ENCODE measurements at regions of chr21 and their contacts with region 1.

Region 1: GRCh38 chr21:44949779-44950198 is 10.0 kb downstream of the SLX9 start:
- DNase-seq: peak; percentile 53 to 98
- H3K4me3 ChIP-seq: no peak overlapping the region
- H3K27ac ChIP-seq: no peak overlapping the region
- H3K4me1 ChIP-seq: no peaks in the 10 kb centered on the region; a peak in 1 of 7 replicates
- H3K27me3 ChIP-seq: no peaks in the 10 kb centered on the region
- CTCF ChIP-seq: peak in 2 of 3 experiments; percentile 93 to 98; a peak in 3 of 4 replicates
- EP300 ChIP-seq: no peak
- POLR2A ChIP-seq: no peak
- RAD21 ChIP-seq: peak; percentile 89 to 90

Region 2: DNA sequence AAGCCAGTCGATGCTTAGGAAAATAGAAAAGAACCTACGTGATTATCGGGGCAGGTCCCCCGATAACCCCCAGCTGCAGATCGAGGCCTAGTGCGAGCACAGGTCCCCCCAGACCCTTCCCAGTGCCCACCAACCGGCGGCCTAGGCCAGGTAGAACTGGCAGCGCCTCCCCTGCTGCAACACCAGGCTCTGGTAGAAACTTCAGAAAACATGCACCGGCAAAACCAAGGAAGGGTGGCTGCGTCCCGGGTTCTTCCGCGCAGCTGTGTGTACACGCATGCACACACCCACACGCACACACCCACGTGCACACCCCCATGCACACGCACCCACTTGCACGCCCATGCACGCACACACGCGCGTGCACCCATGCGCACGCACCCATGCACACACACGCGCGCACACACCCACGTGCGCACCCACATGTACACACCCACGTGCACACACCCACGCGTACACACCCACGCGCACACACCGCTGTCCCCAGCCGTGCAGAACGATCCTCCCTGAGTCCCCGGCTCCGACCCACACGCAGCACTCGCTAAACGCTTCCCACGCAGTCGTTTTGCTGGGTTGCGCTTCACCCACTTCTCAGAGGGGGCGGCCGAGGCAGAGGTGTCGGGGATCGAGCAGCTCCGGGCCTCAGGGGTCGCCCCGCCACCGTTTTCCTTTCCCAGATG is 243.6 kb before region 1 on chr21:
- CTCF ChIA-PET with region 1: no interaction called
- POLR2A ChIA-PET with region 1: no interaction called
- DNase-seq: peak in 1 of 2 experiments; percentile 56
- H3K4me3 ChIP-seq: peak overlapping the region; percentile 34 to 58 (median 44)
- H3K27ac ChIP-seq: peak overlapping the region; percentile 87
- H3K4me1 ChIP-seq: peaks cover 3 to 69% (median 59%) of the 10 kb centered on the region in 4 experiments
- H3K27me3 ChIP-seq: peaks cover 19 to 45% (median 41%) of the 10 kb centered on the region in 4 experiments
- CTCF ChIP-seq: no peak
- EP300 ChIP-seq: no peak
- POLR2A ChIP-seq: no peak
- RAD21 ChIP-seq: no peak

Region 3: DNA sequence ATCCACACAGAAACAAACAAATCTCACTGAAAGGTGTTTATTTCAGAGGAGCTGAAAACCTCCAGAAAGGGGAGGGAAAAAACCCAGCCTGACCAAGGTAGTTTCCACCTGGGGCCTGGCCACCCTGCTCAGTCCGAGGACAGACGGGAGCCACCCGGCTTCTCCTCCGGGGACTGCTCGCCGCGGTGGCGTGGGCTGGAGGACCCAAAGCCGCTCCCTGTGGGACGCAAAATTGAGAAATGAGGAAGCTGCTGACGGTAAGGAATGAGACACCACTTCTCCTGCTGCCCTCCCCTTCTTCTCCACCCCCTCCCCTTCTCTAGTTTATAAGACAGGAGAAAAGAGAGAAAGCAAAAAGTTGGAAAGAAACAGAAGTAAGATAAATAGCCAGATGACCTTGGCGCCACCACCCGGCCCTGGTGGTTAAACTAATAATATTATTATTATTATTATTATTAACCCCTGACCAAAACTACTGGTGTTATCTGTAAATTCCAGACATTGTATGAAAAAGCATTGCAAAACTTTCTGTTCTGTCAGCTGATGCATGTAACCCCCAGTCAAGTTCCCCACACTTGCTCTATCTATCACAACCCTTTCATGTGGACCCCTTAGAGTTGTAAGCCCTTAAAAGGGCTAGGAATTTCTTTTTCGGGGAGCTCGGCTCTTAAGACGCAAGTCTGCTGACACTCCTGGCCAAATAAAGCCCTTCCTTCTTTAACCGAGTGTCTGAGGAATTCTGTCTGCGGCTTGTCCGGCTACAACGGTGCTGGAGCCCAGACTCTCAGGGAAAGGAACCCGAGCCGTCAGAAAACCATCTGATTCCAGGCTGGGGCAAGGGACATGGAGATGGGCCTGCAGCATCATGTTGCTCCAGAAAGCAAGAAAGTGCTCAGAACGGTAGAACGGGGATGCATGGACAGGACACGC is 41.6 kb before region 1 on chr21:
- CTCF ChIA-PET with region 1: no interaction called
- POLR2A ChIA-PET with region 1: no interaction called
- DNase-seq: no peak
- H3K4me3 ChIP-seq: no peak overlapping the region
- H3K27ac ChIP-seq: no peak overlapping the region
- H3K4me1 ChIP-seq: peaks cover 0 to 11% (median 0%) of the 10 kb centered on the region in 4 experiments; a peak in 3 of 7 replicates
- H3K27me3 ChIP-seq: peaks cover 0 to 4% (median 1%) of the 10 kb centered on the region in 4 experiments; a peak in 1 of 7 replicates
- CTCF ChIP-seq: no peak
- EP300 ChIP-seq: no peak
- POLR2A ChIP-seq: no peak
- RAD21 ChIP-seq: no peak

Region 4: DNA sequence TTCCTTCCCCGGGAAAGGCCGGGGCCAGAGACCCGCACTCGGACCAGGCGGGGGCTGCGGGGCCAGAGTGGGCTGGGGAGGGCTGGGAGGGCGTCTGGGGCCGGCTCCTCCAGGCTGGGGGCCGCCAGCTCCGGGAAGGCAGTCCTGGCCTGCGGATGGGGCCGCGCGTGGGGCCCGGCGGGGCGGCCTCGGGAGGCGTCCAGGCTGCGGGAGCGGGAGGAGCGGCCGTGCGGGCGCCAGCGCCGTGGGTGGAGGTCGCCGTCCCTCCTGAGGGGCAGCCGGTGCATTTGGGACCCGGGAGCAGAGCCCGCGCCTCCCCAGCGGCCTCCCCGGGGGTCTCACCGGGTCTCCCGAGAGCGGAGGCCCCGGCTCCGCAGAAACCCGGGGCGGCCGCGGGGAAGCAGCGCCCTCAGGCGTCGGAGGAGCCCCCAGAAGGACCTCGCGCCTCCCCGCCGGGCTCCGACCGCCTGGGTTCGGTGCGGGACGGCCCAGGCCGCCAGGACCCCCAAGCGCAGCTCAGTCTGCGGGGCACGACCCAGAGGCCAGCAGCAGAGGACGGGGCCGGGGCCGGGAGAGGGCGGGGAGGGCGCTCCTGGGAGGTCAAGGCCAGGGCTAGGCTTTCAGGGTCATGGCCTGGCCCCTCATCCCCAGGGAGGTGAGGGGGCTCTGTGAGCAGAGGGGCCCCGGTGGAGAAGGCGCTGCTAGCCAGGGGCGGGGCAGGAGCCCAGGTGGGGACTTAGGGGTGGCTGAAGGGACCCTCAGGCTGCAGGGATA is 17.2 kb before region 1 on chr21:
- CTCF ChIA-PET with region 1: interaction called, 10 read pairs
- POLR2A ChIA-PET with region 1: interaction called, 6 read pairs
- DNase-seq: no peak
- H3K4me3 ChIP-seq: peak overlapping the region in 1 of 4 experiments; percentile 58; a peak in 3 of 8 replicates
- H3K27ac ChIP-seq: no peak overlapping the region
- H3K4me1 ChIP-seq: peaks cover 0 to 25% (median 16%) of the 10 kb centered on the region in 4 experiments; a peak in 5 of 7 replicates
- H3K27me3 ChIP-seq: peaks cover 25 to 72% (median 60%) of the 10 kb centered on the region in 4 experiments
- CTCF ChIP-seq: peak in 2 of 3 experiments; percentile 7 to 32; a peak in 3 of 4 replicates
- EP300 ChIP-seq: no peak
- POLR2A ChIP-seq: no peak
- RAD21 ChIP-seq: peak; percentile 43 to 64; a peak in 3 of 4 replicates

Region 5: DNA sequence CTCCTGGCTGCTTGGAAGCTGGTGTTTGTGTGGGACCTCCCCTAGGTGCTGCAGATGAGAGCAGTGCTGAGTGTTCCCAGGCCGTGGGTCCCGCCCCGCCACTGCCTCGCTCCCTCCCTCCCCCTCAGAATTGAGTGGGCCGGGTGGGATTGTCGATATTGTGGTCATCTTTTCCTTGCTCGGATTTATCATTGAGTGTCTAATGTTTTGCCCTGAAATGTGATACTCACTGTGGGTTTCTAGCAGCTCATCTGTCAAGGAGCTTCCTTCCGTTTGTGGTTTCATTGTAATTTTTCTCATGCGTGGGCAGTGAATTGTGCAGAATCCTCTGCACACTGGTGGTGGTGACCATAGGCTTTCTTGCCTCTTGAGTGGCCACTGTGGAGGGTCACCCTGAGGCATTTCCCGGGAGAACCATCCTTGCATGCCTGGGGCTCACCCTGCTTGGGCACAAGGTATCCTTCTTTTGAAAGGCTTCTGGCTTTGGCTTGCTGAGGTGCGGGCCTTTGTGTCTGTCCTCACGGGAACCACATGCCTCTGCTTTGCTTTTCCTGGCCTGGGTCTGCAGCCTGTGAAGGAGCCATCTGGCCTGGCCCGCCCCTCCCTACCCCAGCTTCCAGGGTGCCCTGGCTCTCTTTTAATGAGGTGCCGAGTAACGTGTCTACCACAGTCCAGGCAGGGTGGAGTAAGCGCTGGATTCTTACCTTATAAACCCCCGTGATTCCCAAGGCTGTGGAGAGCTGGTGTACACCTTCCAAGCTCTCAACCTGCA is 15.6 kb after region 1 on chr21:
- CTCF ChIA-PET with region 1: interaction called, 16 read pairs
- POLR2A ChIA-PET with region 1: interaction called, 4 read pairs
- DNase-seq: no peak
- H3K4me3 ChIP-seq: no peak overlapping the region
- H3K27ac ChIP-seq: no peak overlapping the region
- H3K4me1 ChIP-seq: no peaks in the 10 kb centered on the region; a peak in 1 of 7 replicates
- H3K27me3 ChIP-seq: no peaks in the 10 kb centered on the region
- CTCF ChIP-seq: no peak
- EP300 ChIP-seq: no peak
- POLR2A ChIP-seq: no peak
- RAD21 ChIP-seq: no peak

Region 6: GRCh38 chr21:45011911-45012660 is 62.3 kb after region 1 on chr21:
- CTCF ChIA-PET with region 1: interaction called, 10 read pairs
- POLR2A ChIA-PET with region 1: no interaction called
- DNase-seq: peak; percentile 82 to 84
- H3K4me3 ChIP-seq: peak overlapping the region in 1 of 4 experiments; percentile 32; a peak in 4 of 8 replicates
- H3K27ac ChIP-seq: peak overlapping the region; percentile 21; the same call in 1 of the 2 replicates
- H3K4me1 ChIP-seq: peaks cover 0 to 26% (median 12%) of the 10 kb centered on the region in 4 experiments; a peak in 6 of 7 replicates
- H3K27me3 ChIP-seq: peaks cover 0 to 9% (median 6%) of the 10 kb centered on the region in 4 experiments; a peak in 4 of 7 replicates
- CTCF ChIP-seq: peak in 2 of 3 experiments; percentile 10 to 26; a peak in 1 of 4 replicates
- EP300 ChIP-seq: no peak
- POLR2A ChIP-seq: no peak
- RAD21 ChIP-seq: peak in 1 of 2 experiments; percentile 25; a peak in 2 of 4 replicates

Measured in H1 (cell line).